Posterior vena cava (tissue), 2 donors: ENCODE measurements at regions of chr19 and their contacts with region 1.

Region 1: GRCh38 chr19:47157431-47158321 is 27.0 kb downstream of the SAE1 start:
- DNase-seq: no peak

Region 2: GRCh38 chr19:47190167-47190727 is 32.6 kb after region 1 on chr19:
- intact Hi-C with region 1: loop called in 1 of 2 experiments (anchors 1 kb)
- DNase-seq: no peak

Region 3: GRCh38 chr19:47225746-47226425 is 68.2 kb after region 1 on chr19:
- intact Hi-C with region 1: loop called in 1 of 2 experiments (anchors 10 kb)
- DNase-seq: peak; percentile 96